CD8-positive, alpha-beta T cell (primary cell): ENCODE measurements at regions of chr6 and their contacts with region 1.

Region 1: DNA sequence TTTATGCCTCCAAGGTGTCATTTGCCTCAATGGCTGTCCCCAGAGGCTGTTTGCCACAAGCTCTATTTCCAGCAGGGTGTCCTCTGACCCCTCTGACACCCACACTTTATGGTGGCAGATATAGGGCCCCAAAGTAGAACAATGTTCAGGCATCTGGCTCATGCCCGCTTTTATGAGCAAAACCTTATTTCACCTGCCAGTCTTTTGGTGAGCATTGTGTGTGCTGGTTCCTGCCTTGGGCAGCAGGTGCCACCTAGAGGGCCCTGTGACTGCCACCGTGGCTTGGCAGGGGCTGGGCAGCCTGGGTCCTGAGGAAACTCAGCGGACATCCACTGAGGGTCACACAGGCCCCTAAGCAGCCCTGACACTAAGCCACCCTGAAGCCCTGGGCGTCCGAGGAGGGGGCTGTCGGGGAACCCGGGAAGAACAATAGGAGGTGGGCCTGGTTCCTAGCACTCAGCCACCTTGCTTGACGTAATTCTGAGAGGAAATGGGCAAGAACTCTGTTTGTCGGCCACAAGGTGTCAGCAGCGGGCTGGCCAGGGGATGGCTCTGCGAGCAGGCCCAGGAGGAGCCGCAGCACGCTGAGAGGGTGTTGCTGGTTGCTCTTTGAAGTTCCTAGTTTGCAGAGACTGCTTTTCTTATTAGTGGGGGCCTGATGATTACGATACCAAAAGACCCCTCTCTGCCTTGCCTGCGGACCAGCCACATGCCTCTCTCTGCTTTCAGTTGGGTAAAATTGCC is 148.9 kb downstream of the SCML4 start:
- DNase-seq: peak; percentile 74 to 93 (median 90)
- ATAC-seq: peak; percentile 99
- H3K4me3 ChIP-seq: peak overlapping the region; percentile 9
- H3K4me3 Mint-ChIP-seq: peak overlapping the region; percentile 79
- H3K27ac ChIP-seq: peak overlapping the region; percentile 15 to 50
- H3K27ac Mint-ChIP-seq: peak overlapping the region; percentile 93
- H3K4me1 ChIP-seq: peaks cover 13% of the 10 kb centered on the region
- H3K4me1 Mint-ChIP-seq: peaks cover 15% of the 10 kb centered on the region
- H3K27me3 ChIP-seq: no peaks in the 10 kb centered on the region
- H3K27me3 Mint-ChIP-seq: no peaks in the 10 kb centered on the region
- CTCF ChIP-seq: peak; percentile 84

Region 2: GRCh38 chr6:107132330-107132954 is 542.7 kb before region 1 on chr6:
- CTCF ChIA-PET with region 1: no interaction called
- POLR2A ChIA-PET with region 1: no interaction called
- intact Hi-C with region 1: loop called in 1 of 2 experiments (anchors 5 kb)
- DNase-seq: peak in 5 of 9 experiments; percentile 20 to 44 (median 33)
- ATAC-seq: no peak
- H3K4me3 ChIP-seq: no peak overlapping the region
- H3K4me3 Mint-ChIP-seq: no peak overlapping the region
- H3K27ac ChIP-seq: no peak overlapping the region
- H3K27ac Mint-ChIP-seq: no peak overlapping the region
- H3K4me1 ChIP-seq: no peaks in the 10 kb centered on the region
- H3K4me1 Mint-ChIP-seq: no peaks in the 10 kb centered on the region
- H3K27me3 ChIP-seq: no peaks in the 10 kb centered on the region
- H3K27me3 Mint-ChIP-seq: peaks cover 2% of the 10 kb centered on the region
- CTCF ChIP-seq: peak; percentile 39

Region 3: DNA sequence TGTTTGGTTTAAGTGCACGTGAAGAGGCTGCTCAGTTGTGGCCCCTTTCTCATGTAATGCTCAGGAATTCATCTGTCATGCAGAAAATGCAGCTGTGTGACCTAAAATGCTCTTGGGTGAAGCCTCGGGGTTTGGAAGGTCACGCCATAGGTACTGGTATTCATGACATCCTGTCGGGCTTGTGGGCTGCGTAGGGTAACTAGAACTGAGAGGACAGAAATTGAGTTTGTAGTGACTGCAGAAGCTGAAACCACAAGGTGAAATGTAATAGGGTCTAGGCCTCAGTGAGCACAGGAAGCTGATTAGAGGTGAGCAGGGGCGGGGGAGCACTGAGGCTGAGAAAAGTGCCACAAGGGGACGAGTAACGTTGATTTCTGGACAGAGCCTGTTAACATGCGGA is 56.5 kb before region 1 on chr6:
- CTCF ChIA-PET with region 1: interaction called, 4 read pairs
- POLR2A ChIA-PET with region 1: interaction called, 3 read pairs
- intact Hi-C with region 1: loop called in 1 of 2 experiments (anchors 1 kb)
- DNase-seq: peak in 8 of 9 experiments; percentile 26 to 82 (median 58)
- ATAC-seq: peak; percentile 95
- H3K4me3 ChIP-seq: no peak overlapping the region
- H3K4me3 Mint-ChIP-seq: peak overlapping the region; percentile 23
- H3K27ac ChIP-seq: peak overlapping the region; percentile 20 to 72
- H3K27ac Mint-ChIP-seq: peak overlapping the region; percentile 84
- H3K4me1 ChIP-seq: peaks cover 37% of the 10 kb centered on the region
- H3K4me1 Mint-ChIP-seq: peaks cover 36% of the 10 kb centered on the region
- H3K27me3 ChIP-seq: no peaks in the 10 kb centered on the region
- H3K27me3 Mint-ChIP-seq: no peaks in the 10 kb centered on the region
- CTCF ChIP-seq: no peak

Region 4: DNA sequence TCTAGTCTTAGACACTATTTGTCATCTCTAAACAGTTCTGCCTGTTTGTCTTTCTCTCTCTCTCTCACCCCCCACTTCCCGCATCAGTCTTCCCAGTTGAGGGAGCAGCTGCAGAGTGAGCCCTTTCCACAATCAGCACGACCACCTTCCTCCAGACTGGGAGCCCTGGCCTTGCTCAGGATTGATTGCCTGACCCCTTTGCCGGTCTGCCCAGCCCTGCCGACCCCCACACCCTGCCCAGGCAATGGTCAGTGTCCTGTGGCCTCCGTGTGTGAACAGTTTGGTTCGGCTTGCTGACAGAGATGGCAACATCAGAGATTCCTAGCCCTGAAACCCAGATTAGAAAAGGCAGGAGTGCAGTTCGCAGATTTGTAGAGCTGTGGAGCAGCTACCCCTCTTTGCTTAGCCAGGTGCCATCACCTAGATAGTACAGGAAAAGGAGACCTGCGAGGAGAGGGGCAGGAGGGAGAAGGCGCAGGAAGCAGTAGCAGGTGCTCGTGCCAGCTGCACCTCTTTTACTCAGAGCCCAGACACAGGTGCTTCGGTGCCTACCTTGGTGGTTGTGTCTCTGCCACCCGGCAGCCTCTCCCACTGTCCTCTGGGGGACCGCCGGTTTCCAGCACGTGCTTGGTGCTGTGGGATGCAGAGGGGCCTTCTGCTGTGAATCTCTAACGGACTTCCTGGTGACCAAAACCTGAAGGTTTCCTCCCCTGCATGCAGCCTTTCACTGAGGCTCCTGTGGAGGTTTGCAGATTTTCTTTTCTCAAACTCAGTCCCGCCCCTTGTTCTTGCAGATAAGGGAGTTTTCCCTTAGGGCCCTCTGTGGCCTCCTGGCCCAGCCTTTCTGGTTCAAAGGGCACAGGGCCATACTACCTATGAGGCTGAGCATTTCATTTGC is 56.5 kb after region 1 on chr6:
- CTCF ChIA-PET with region 1: interaction called, 11 read pairs
- POLR2A ChIA-PET with region 1: interaction called, 3 read pairs
- intact Hi-C with region 1: loop called in 1 of 2 experiments (anchors 2 kb)
- DNase-seq: peak in 6 of 9 experiments; percentile 37 to 74 (median 45)
- ATAC-seq: peak; percentile 31
- H3K4me3 ChIP-seq: peak overlapping the region; percentile 73 to 85
- H3K4me3 Mint-ChIP-seq: peak overlapping the region; percentile 88
- H3K27ac ChIP-seq: peak overlapping the region; percentile 43 to 83
- H3K27ac Mint-ChIP-seq: peak overlapping the region; percentile 94
- H3K4me1 ChIP-seq: peaks cover 82% of the 10 kb centered on the region
- H3K4me1 Mint-ChIP-seq: peaks cover 95% of the 10 kb centered on the region
- H3K27me3 ChIP-seq: no peaks in the 10 kb centered on the region
- H3K27me3 Mint-ChIP-seq: no peaks in the 10 kb centered on the region
- CTCF ChIP-seq: no peak

Region 5: DNA sequence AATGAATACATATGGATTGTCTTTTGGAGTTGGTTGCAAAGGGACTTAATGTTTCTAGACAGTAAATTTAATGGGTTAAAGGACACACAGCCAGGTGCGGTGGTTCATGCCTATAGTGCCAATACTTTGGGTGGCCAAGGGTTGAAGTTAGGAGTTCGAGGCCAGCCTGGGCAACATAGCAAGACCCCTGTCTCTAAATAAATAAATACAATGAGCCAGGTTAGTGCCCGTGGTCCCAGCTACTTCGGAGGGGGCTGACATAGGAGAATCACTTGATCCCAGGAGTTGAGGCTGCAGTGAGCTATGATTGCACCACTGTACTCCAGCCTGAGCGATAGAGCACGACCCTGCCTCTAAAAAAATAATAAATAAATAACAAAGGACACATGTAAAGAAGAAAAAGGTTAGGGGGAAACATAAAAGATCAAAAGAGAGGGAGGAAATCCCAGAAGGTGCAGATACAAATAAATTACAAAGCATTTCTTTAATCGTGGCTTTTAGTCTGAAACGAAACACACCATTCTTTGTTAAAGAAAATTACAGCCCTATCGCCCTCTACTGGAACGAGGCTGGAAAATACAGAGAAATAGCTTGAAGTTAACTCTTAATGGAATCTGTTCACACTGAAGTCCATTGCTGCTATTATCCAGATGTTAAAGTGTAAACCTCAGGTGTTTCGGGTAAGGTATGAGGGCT is 191.6 kb after region 1 on chr6:
- CTCF ChIA-PET with region 1: interaction called, 64 read pairs
- POLR2A ChIA-PET with region 1: interaction called, 5 read pairs
- intact Hi-C with region 1: loop called (anchors 1 kb)
- DNase-seq: peak in 6 of 9 experiments; percentile 9 to 75 (median 34)
- ATAC-seq: peak; percentile 70
- H3K4me3 ChIP-seq: no peak overlapping the region
- H3K4me3 Mint-ChIP-seq: no peak overlapping the region
- H3K27ac ChIP-seq: no peak overlapping the region
- H3K27ac Mint-ChIP-seq: no peak overlapping the region
- H3K4me1 ChIP-seq: no peaks in the 10 kb centered on the region
- H3K4me1 Mint-ChIP-seq: no peaks in the 10 kb centered on the region
- H3K27me3 ChIP-seq: no peaks in the 10 kb centered on the region
- H3K27me3 Mint-ChIP-seq: no peaks in the 10 kb centered on the region
- CTCF ChIP-seq: peak; percentile 82

Region 6: DNA sequence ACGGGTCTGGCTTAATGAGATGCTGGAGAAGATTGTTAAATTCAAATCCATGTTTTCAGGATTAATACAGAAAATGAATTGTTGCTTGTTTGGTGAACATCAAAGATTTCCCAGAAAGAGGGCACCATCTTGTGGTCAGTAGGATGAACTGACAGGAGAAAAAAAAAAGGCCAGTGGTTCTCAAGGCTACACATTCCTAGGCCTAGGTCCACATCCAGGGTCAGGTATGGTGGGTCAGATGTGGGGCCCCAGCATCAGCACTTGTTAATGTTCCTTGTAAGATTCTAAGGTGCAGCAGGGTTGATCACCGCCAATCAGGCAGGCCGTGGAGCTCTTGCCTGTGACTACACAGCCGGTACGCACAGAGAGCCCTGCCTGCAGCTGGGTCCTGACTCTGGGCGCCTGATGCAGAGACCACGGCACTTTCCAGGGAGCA is 851.6 kb after region 1 on chr6:
- CTCF ChIA-PET with region 1: interaction called, 3 read pairs
- POLR2A ChIA-PET with region 1: no interaction called
- intact Hi-C with region 1: loop called in 1 of 2 experiments (anchors 5 kb)
- DNase-seq: peak in 2 of 9 experiments; percentile 36 to 56
- ATAC-seq: peak; percentile 38
- H3K4me3 ChIP-seq: no peak overlapping the region
- H3K4me3 Mint-ChIP-seq: no peak overlapping the region
- H3K27ac ChIP-seq: no peak overlapping the region
- H3K27ac Mint-ChIP-seq: no peak overlapping the region
- H3K4me1 ChIP-seq: no peaks in the 10 kb centered on the region
- H3K4me1 Mint-ChIP-seq: no peaks in the 10 kb centered on the region
- H3K27me3 ChIP-seq: no peaks in the 10 kb centered on the region
- H3K27me3 Mint-ChIP-seq: no peaks in the 10 kb centered on the region
- CTCF ChIP-seq: peak; percentile 63